ENCODE measurements at regions of chr2 and their contacts with region 1.

Region 1: DNA sequence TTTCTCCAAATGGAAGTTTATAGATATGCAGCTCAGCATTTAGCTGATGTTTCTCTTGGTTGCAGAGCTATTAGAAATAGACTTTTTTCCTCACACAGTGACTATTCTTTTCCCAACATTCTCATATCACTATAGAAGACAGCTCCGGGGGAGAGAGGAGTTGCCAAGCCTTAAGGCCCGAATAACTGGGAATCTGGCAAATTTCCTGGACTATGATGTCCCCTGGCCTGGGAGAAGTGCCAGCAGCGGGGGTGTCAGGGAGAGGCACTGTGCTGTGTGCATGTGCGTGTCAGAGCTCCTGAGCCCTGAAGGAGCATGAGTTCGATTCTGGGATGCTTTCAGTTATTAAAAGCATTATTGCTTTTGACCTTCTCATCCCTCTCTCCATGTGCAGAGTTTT is 311.0 kb downstream of the PRKCE start:
- DNase-seq: peak in 1 of 2 donors; percentile 36
- H3K4me3 ChIP-seq: no peak overlapping the region
- H3K27ac ChIP-seq: peak overlapping the region; percentile 29 to 77
- H3K4me1 ChIP-seq: peaks cover 0 to 18% of the 10 kb centered on the region in 2 donors
- H3K27me3 ChIP-seq: no peaks in the 10 kb centered on the region
- CTCF ChIP-seq: no peak
- POLR2A ChIP-seq: no peak

Region 2: GRCh38 chr2:45283764-45284620 is 678.5 kb before region 1 on chr2:
- intact Hi-C with region 1: no loop called
- DNase-seq: no peak
- H3K4me3 ChIP-seq: no peak overlapping the region
- H3K27ac ChIP-seq: no peak overlapping the region
- H3K4me1 ChIP-seq: no peaks in the 10 kb centered on the region
- H3K27me3 ChIP-seq: no peaks in the 10 kb centered on the region
- CTCF ChIP-seq: no peak
- POLR2A ChIP-seq: no peak

Region 3: GRCh38 chr2:45974056-45974455 is 11.5 kb after region 1 on chr2:
- intact Hi-C with region 1: loop called (anchors 1 kb)
- DNase-seq: no peak
- H3K4me3 ChIP-seq: no peak overlapping the region
- H3K27ac ChIP-seq: no peak overlapping the region
- H3K4me1 ChIP-seq: no peaks in the 10 kb centered on the region
- H3K27me3 ChIP-seq: no peaks in the 10 kb centered on the region
- CTCF ChIP-seq: no peak
- POLR2A ChIP-seq: no peak

Measured in breast epithelium (tissue), 4 donors.